ENCODE measurements at regions of chr5 and their contacts with region 1.

Region 1: DNA sequence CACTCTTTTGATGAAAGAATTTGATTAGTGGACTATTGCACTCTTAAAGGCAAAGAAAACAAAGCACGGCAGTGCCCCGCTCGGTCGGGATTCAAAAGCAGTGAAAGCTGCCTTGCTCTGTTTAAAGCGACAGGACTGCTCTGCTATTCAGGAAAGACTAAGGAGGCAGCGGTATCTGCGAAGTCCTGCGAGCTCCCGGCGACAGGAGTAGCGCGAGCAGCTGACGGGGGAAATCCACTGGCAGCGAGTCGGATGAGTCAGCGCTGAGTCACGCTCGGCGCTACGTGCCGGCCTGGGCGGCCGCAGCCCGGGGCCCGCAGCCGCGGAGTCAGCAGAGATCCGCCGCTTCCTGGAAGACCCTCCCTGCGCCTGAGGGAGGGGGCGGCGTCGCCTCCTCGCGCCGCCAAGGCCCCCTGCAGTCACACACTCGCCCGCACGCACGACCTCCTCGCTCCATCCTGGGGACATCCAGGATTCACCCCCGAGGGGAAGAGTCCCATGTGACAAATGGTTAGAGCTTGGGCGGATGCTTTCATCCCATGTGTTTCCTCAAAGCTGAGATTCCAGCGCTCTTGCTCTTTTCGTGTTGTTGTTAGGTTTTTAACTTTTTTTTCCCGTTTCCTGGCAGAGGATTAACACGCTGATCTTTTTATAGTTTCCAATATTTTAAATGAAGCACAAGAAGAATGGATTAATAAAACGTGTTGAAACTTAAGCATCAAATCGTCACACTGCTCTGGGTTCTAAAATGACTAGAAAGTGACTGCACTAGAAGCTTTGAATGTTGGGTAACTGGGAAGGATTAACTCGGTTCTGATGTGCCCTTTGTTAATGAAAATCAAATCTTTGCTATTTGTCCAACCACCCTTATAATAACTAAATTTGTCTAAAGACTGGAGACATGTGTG is 102.5 kb downstream of the ARRDC3 start:
- DNase-seq: peak; percentile 84
- H3K4me3 Mint-ChIP-seq: peak overlapping the region; percentile 81
- H3K27ac Mint-ChIP-seq: peak overlapping the region; percentile 82
- H3K4me1 Mint-ChIP-seq: peaks cover 40% of the 10 kb centered on the region
- H3K27me3 Mint-ChIP-seq: peaks cover 4% of the 10 kb centered on the region

Region 2: GRCh38 chr5:90409318-90410177 is 871.1 kb before region 1 on chr5 and contains the start of gene CETN3:
- intact Hi-C with region 1: loop called (anchors 5 kb)
- DNase-seq: peak; percentile 86
- H3K4me3 Mint-ChIP-seq: no peak within 1 kb of the TSS
- H3K27ac Mint-ChIP-seq: no peak within 1 kb of the TSS
- H3K4me1 Mint-ChIP-seq: peaks cover 21% of the 10 kb centered on the region
- H3K27me3 Mint-ChIP-seq: peaks cover 3% of the 10 kb centered on the region
- total RNA-seq, gene CETN3: 36.2 and 39.8 TPM in 2 replicates

Region 3: GRCh38 chr5:91269198-91269597 is 11.4 kb before region 1 on chr5:
- intact Hi-C with region 1: loop called (anchors 1 kb)
- DNase-seq: peak; percentile 41
- H3K4me3 Mint-ChIP-seq: no peak overlapping the region
- H3K27ac Mint-ChIP-seq: peak overlapping the region; percentile 49
- H3K4me1 Mint-ChIP-seq: peaks cover 40% of the 10 kb centered on the region
- H3K27me3 Mint-ChIP-seq: peaks cover 17% of the 10 kb centered on the region

Region 4: GRCh38 chr5:91332267-91333045 is 51.8 kb after region 1 on chr5:
- intact Hi-C with region 1: loop called (anchors 1 kb)
- DNase-seq: no peak
- H3K4me3 Mint-ChIP-seq: no peak overlapping the region
- H3K27ac Mint-ChIP-seq: peak overlapping the region; percentile 37
- H3K4me1 Mint-ChIP-seq: peaks cover 33% of the 10 kb centered on the region
- H3K27me3 Mint-ChIP-seq: peaks cover 11% of the 10 kb centered on the region

Region 5: DNA sequence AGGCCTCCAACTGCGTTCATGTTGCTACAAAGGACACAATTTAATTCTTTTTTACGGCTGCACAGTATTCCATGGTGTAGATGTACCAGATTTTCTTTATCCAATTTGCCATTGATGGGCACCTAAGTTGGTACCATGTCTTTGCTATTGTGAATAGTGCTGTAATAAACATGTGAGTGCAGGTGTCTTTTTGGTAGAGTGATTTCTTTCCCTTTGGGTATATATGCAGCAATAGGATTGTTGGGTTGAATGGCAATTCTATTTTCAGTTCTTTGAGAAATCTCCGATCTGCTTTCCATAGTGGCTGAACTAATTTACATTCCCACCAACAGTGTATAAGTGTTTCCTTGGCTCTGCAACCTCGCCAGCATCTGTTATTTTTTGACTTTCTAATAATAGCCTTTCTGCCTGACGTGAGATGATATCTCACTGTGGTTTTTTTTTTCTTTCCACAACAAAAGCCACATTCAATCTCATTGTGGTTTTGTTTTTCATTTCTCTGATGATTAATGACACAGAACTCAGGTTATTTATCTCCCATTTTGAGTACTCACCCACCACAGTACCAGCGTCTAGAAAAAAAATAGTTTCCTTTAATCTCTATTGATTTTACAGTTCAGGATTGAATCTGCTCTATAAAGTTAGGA is 80.6 kb after region 1 on chr5:
- intact Hi-C with region 1: loop called (anchors 5 kb)
- DNase-seq: no peak
- H3K4me3 Mint-ChIP-seq: no peak overlapping the region
- H3K27ac Mint-ChIP-seq: peak overlapping the region; percentile 67
- H3K4me1 Mint-ChIP-seq: peaks cover 14% of the 10 kb centered on the region
- H3K27me3 Mint-ChIP-seq: peaks cover 23% of the 10 kb centered on the region

Measured in activated T-helper 1 cell treated with anti-CD3 and anti-CD28 coated beads, Interleukin-12 subunit alpha, Interleukin-12 subunit beta, Interleukin-2, Interleukin-4 antibody, amounts not matched to agents 30 ng/mL and 10 ng/mL and 1 ng/mL, durations not matched to agents 14 hours and 24 hours and 36 hours (primary cell).